SK-N-SH (cell line): ENCODE measurements at regions of chr12 and their contacts with region 1.

Region 1: GRCh38 chr12:6423267-6424007 is 21.3 kb upstream of the CD27 start:
- DNase-seq: peak; percentile 83
- H3K4me3 ChIP-seq: no peak overlapping the region
- H3K27ac ChIP-seq: no peak overlapping the region
- H3K4me1 ChIP-seq: no peaks in the 10 kb centered on the region
- H3K27me3 ChIP-seq: no peaks in the 10 kb centered on the region
- CTCF ChIP-seq: peak; percentile 84
- EP300 ChIP-seq: no peak
- RAD21 ChIP-seq: peak; percentile 94

Region 2: GRCh38 chr12:6438345-6438744 is 14.9 kb after region 1 on chr12:
- CTCF ChIA-PET with region 1: interaction called, 16 read pairs
- POLR2A ChIA-PET with region 1: no interaction called
- DNase-seq: no peak
- H3K4me3 ChIP-seq: no peak overlapping the region
- H3K27ac ChIP-seq: no peak overlapping the region
- H3K4me1 ChIP-seq: no peaks in the 10 kb centered on the region
- H3K27me3 ChIP-seq: no peaks in the 10 kb centered on the region
- CTCF ChIP-seq: no peak
- EP300 ChIP-seq: no peak
- RAD21 ChIP-seq: no peak

Region 3: DNA sequence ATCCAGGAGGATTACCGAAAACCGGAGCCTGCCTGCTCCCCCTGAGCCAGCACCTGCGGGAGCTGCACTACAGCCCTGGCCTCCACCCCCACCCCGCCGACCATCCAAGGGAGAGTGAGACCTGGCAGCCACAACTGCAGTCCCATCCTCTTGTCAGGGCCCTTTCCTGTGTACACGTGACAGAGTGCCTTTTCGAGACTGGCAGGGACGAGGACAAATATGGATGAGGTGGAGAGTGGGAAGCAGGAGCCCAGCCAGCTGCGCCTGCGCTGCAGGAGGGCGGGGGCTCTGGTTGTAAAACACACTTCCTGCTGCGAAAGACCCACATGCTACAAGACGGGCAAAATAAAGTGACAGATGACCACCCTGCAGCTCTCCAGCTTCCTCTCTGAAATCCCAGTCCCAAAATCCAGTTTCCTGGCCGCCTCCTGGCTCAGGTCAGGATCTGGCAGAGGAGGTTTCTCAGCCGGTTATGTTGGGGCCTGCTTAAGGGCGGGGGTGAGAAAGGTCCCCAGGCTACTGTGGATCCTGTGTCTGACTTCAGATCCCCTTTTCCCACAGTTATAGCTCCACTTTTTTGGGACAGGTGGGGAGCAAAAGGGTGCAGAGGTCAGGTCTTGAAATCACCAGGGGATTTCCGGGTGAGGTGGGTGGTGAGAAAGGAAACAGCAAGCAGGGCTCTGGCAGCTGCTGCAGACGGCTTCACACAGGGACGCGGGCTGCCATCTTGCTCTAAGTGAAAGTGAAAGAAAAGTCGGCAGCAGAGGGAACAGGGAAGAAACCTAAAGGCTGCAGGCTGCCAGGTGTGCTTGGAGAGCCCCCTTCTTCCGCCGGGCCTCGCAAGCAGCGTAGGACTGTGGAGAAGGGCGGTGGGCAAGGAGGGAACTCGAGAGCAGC is 28.2 kb after region 1 on chr12 and contains the start of gene TAPBPL:
- CTCF ChIA-PET with region 1: interaction called, 20 read pairs
- POLR2A ChIA-PET with region 1: no interaction called
- DNase-seq: peak; percentile 88
- H3K4me3 ChIP-seq: peak within 1 kb of the TSS; percentile 63 to 69
- H3K27ac ChIP-seq: peak within 1 kb of the TSS; percentile 85 to 91
- H3K4me1 ChIP-seq: peaks cover 11 to 29% of the 10 kb centered on the region in 2 experiments; a peak in 2 of 4 replicates
- H3K27me3 ChIP-seq: no peaks in the 10 kb centered on the region
- CTCF ChIP-seq: no peak
- EP300 ChIP-seq: no peak
- RAD21 ChIP-seq: no peak
- polyA plus RNA-seq, gene TAPBPL: 24.1 and 26.0 TPM in 2 replicates

Region 4: GRCh38 chr12:6458281-6459003 is 35.0 kb after region 1 on chr12:
- CTCF ChIA-PET with region 1: interaction called, 10 read pairs
- POLR2A ChIA-PET with region 1: no interaction called
- DNase-seq: no peak
- H3K4me3 ChIP-seq: no peak overlapping the region
- H3K27ac ChIP-seq: no peak overlapping the region
- H3K4me1 ChIP-seq: no peaks in the 10 kb centered on the region; a peak in 1 of 4 replicates
- H3K27me3 ChIP-seq: no peaks in the 10 kb centered on the region
- CTCF ChIP-seq: no peak
- EP300 ChIP-seq: no peak
- RAD21 ChIP-seq: no peak

Region 5: DNA sequence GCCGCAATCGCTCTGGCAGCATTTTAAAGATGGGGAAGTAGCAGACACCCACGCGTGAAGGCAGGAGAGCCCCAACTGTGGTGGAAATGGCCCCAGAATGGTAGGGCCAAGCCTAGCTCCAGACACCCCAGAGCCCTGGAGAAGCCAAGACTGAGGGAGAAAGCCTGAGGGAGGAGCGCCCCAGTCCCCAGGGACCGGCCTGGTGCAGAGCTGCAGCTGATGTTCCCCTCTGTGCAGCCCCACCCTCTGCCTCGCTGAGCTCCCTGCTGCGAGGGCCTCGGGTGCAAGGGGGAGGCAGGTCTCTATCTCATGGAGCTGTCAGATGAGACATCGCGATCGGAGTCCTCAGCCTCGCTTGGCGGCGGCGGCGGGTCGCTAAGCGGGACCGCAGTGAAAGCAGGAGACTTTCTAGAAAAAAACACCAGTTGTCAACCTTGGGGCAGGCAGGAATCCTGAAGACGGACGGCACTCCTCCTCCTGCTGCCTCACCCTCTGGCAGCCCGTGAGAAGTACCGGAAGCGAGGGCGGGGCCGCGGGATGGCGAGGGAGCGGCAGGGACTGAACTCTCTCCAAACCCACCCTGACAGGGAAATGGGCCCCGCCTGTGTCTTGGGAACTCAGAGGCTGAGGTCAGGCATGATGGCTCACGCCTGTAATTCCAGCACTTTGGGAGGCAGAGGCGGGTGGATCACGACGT is 116.9 kb after region 1 on chr12:
- CTCF ChIA-PET with region 1: interaction called, 19 read pairs
- POLR2A ChIA-PET with region 1: no interaction called
- DNase-seq: peak; percentile 36
- H3K4me3 ChIP-seq: no peak overlapping the region
- H3K27ac ChIP-seq: no peak overlapping the region
- H3K4me1 ChIP-seq: peaks cover 5 to 20% of the 10 kb centered on the region in 2 experiments; a peak in 3 of 4 replicates
- H3K27me3 ChIP-seq: no peaks in the 10 kb centered on the region
- CTCF ChIP-seq: no peak
- EP300 ChIP-seq: no peak
- RAD21 ChIP-seq: no peak